Activated CD4-positive, alpha-beta T cell treated with anti-CD3 and anti-CD28 coated beads, Interleukin-2, amount 10 ng/mL, durations not matched to agents 24 days and 14 days (primary cell): ENCODE measurements at regions of chr6 and their contacts with region 1.

Region 1: GRCh38 chr6:42009966-42010891 is 40.1 kb upstream of the TAF8 start:
- DNase-seq: peak; percentile 77
- H3K4me3 Mint-ChIP-seq: peak overlapping the region; percentile 72
- H3K27ac Mint-ChIP-seq: peak overlapping the region; percentile 90
- H3K4me1 Mint-ChIP-seq: peaks cover 62% of the 10 kb centered on the region
- H3K27me3 Mint-ChIP-seq: no peaks in the 10 kb centered on the region

Region 2: DNA sequence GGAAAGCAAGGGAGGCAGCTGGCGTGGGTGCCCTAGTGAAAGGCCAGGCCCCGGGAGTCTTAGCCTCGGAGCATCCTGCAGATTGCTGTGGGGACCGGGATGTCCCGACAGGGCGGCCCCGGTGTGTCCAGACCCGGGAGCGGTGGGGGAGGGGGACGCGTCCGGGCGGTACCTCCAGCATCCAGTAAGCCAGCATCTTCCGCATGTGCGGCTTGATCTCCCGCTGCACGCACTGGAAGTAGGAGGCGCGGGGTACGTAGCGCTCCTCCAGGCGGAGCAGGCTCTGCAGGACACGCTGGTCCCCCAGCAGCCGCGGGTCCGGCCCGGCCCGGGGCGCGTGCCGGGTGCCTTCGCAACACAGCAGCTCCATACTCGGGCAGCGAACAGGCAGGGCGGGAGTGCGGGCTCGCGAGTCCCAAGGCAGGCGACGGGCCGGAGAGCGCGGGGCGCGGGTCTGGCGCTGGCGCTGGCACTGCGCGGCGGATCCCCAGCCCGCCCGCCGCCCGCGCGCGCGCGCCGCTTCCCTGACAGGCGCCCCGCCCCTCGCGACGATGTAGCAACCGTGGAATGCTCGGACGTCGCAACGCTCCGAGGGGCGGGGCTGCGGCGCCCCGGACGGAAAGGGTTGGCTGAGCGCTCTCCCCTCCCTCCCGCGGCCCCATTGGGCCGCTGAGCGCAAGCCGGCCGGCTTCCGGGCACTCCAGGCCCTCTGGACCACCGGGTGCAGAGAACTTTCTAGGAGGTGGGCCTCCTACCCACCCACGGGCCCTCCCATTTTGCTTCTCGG is 68.8 kb before region 1 on chr6 and contains the start of gene CCND3:
- intact Hi-C with region 1: loop called (anchors 2 kb)
- DNase-seq: peak; percentile 97
- H3K4me3 Mint-ChIP-seq: peak within 1 kb of the TSS; percentile 100
- H3K27ac Mint-ChIP-seq: peak within 1 kb of the TSS; percentile 96
- H3K4me1 Mint-ChIP-seq: peaks cover 46% of the 10 kb centered on the region
- H3K27me3 Mint-ChIP-seq: no peaks in the 10 kb centered on the region
- total RNA-seq, gene CCND3: 483 and 491 TPM in 2 replicates

Region 3: GRCh38 chr6:41976794-41977484 is 33.3 kb before region 1 on chr6:
- intact Hi-C with region 1: loop called (anchors 5 kb)
- DNase-seq: no peak
- H3K4me3 Mint-ChIP-seq: peak overlapping the region; percentile 57
- H3K27ac Mint-ChIP-seq: peak overlapping the region; percentile 87
- H3K4me1 Mint-ChIP-seq: peaks cover 43% of the 10 kb centered on the region
- H3K27me3 Mint-ChIP-seq: no peaks in the 10 kb centered on the region

Region 4: GRCh38 chr6:42563697-42564505 is 553.7 kb after region 1 on chr6 and contains the start of gene UBR2:
- intact Hi-C with region 1: no loop called
- DNase-seq: peak; percentile 98
- H3K4me3 Mint-ChIP-seq: peak within 1 kb of the TSS; percentile 99
- H3K27ac Mint-ChIP-seq: peak within 1 kb of the TSS; percentile 93
- H3K4me1 Mint-ChIP-seq: peaks cover 25% of the 10 kb centered on the region
- H3K27me3 Mint-ChIP-seq: peaks cover 2% of the 10 kb centered on the region
- total RNA-seq, gene UBR2: 30.1 and 30.8 TPM in 2 replicates